Upper lobe of right lung (tissue), 1 donor: ENCODE measurements at regions of chr1 and their contacts with region 1.

Region 1: GRCh38 chr1:43414634-43415223 is 25.0 kb downstream of the SZT2 start:
- DNase-seq: no peak
- ATAC-seq: peak; percentile 93
- H3K4me3 ChIP-seq: no peak overlapping the region
- H3K27ac ChIP-seq: no peak overlapping the region
- H3K4me1 ChIP-seq: no peaks in the 10 kb centered on the region
- H3K27me3 ChIP-seq: no peaks in the 10 kb centered on the region
- CTCF ChIP-seq: peak; percentile 71

Region 2: GRCh38 chr1:43227143-43227764 is 187.5 kb before region 1 on chr1:
- intact Hi-C with region 1: loop called (anchors 5 kb)
- DNase-seq: peak; percentile 87
- ATAC-seq: peak; percentile 93
- H3K4me3 ChIP-seq: no peak overlapping the region
- H3K27ac ChIP-seq: peak overlapping the region; percentile 32
- H3K4me1 ChIP-seq: peaks cover 7% of the 10 kb centered on the region
- H3K27me3 ChIP-seq: no peaks in the 10 kb centered on the region
- CTCF ChIP-seq: peak; percentile 96